ENCODE measurements at regions of chr2 and their contacts with region 1.

Region 1: DNA sequence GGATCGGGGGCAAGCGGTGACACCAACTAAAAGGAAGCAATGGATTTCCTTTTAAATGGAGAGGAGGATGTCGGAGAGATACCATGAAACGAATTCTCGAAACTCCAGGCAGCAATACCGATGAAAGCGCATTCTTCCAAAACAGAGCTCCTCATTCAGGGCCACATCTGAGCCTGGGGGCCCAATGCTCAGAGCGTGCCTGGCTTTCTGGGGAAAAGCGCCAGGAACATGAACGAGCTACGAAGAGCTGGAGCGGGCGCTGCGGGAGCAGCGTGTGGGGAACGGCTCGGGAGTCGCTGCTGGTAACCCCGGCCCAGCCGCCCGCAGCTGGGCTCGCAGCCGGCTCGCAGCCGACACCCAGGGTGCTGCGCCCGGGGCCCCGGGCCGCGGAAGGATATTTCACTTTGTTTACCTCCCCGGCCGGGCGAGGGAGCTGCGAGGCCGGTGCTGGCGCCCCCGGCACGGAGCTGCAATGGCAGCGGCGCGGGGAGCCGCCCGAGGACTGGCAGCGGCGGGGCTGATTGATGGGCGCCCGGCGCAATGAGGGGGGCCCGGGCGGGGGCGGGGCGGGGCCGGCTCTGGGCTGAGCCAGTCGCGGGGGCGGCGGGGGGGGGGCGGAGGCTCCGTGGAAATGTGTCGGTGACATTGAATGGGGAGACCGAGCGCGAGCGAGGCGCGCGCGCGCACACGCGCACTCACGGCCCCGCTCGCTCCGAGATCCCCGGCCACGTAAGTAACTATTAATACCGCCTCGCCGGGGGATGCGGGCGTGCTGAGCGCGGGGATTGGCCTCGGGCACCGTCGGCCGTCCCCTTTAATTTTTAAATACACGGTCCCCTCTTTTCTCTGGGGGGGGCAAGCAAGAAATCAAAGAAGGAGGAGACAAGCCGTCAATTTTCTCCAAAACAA is at the start of gene TRIB2:
- DNase-seq: peak; percentile 78
- ATAC-seq: peak; percentile 67
- H3K4me3 Mint-ChIP-seq: peak within 1 kb of the TSS; percentile 98
- H3K27ac Mint-ChIP-seq: peak within 1 kb of the TSS; percentile 94
- H3K4me1 Mint-ChIP-seq: peaks cover 38% of the 10 kb centered on the region
- H3K27me3 Mint-ChIP-seq: peaks cover 5% of the 10 kb centered on the region; the same call in 1 of the 2 replicates
- CTCF ChIP-seq: 0 out of 2 replicates have a peak, but pooled peaks have one; percentile 7
- total RNA-seq, gene TRIB2: 79.6 to 89.3 TPM (median 83.1 TPM) in 3 replicates

Region 2: GRCh38 chr2:12547566-12548170 is 168.9 kb before region 1 on chr2:
- CTCF ChIA-PET with region 1: interaction called, 14 read pairs
- POLR2A ChIA-PET with region 1: no interaction called
- DNase-seq: peak; percentile 54
- ATAC-seq: peak; percentile 70
- H3K4me3 Mint-ChIP-seq: no peak overlapping the region
- H3K27ac Mint-ChIP-seq: no peak overlapping the region
- H3K4me1 Mint-ChIP-seq: peaks cover 10% of the 10 kb centered on the region; the same call in 1 of the 2 replicates
- H3K27me3 Mint-ChIP-seq: no peaks in the 10 kb centered on the region
- CTCF ChIP-seq: no peak

Region 3: GRCh38 chr2:12624905-12625598 is 91.5 kb before region 1 on chr2:
- CTCF ChIA-PET with region 1: interaction called, 18 read pairs
- POLR2A ChIA-PET with region 1: no interaction called
- DNase-seq: peak; percentile 57
- ATAC-seq: peak; percentile 95
- H3K4me3 Mint-ChIP-seq: peak overlapping the region; percentile 17; the same call in 1 of the 2 replicates
- H3K27ac Mint-ChIP-seq: peak overlapping the region; percentile 73
- H3K4me1 Mint-ChIP-seq: peaks cover 52% of the 10 kb centered on the region
- H3K27me3 Mint-ChIP-seq: 0 out of 2 replicates have a peak, but pooled peaks cover 3% of the 10 kb centered on the region
- CTCF ChIP-seq: no peak

Region 4: DNA sequence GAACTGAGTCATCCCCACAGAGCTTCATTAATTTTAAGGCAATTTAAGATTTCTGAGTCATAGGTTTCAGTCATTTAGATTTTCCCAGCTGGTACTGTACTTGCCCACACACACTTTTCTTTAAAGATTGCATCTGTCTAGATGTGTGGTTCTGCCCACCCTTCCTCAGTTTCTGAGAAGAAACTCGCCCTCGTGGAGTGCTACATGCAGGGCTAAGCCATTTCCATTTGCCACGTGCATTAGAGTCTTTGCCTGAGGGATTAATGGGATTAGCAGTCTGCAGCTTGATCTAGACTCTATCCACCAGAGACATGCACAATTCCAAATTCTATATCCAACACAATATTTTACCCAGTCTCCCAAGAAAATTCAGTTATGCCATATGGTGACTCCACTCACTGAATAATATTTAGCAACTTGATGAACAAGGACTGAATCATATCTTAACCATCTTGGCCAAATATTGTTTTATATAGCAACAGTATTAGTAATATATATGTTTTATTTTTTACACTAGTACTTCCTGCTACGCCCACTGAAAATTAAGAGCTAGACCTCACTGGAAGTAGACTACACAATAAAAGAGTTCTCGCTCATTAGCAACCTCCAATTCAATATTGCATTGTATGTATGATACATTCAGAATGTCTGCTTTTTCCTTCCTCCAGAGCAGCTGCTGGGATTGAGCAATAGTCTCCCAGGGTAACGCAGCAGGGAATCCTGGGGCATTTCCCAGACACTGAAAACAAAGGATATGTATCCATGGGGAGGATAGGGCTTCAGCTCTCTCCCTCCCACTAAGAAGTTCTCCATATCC is 14.0 kb before region 1 on chr2:
- CTCF ChIA-PET with region 1: interaction called, 24 read pairs
- POLR2A ChIA-PET with region 1: no interaction called
- DNase-seq: no peak
- ATAC-seq: peak; percentile 74
- H3K4me3 Mint-ChIP-seq: no peak overlapping the region
- H3K27ac Mint-ChIP-seq: no peak overlapping the region
- H3K4me1 Mint-ChIP-seq: peaks cover 14% of the 10 kb centered on the region
- H3K27me3 Mint-ChIP-seq: no peaks in the 10 kb centered on the region
- CTCF ChIP-seq: no peak

Region 5: DNA sequence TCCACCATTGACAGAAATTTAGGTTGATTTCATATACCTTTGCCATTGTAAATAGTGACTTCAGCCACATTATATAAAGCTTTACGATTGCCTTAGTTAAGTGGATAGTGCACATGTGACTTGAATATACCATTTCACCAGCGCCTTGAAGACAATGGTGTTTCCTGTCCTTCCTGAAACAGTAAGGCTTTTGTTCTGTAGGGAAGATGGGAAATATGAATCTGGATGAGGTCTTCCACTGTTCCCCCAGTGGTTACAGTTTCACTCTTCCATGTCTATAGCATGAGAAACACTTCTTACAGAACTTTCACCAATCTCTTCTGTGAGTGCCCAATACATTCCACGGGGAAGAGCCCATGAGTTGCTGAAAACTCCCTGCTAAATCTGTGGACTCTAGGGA is 240.7 kb after region 1 on chr2:
- CTCF ChIA-PET with region 1: no interaction called
- POLR2A ChIA-PET with region 1: no interaction called
- DNase-seq: no peak
- ATAC-seq: no peak
- H3K4me3 Mint-ChIP-seq: no peak overlapping the region
- H3K27ac Mint-ChIP-seq: no peak overlapping the region
- H3K4me1 Mint-ChIP-seq: peaks cover 1% of the 10 kb centered on the region; the same call in 1 of the 2 replicates
- H3K27me3 Mint-ChIP-seq: no peaks in the 10 kb centered on the region
- CTCF ChIP-seq: no peak

Region 6: GRCh38 chr2:13006829-13007717 is 290.5 kb after region 1 on chr2:
- CTCF ChIA-PET with region 1: interaction called, 31 read pairs
- POLR2A ChIA-PET with region 1: no interaction called
- DNase-seq: peak; percentile 70
- ATAC-seq: peak; percentile 98
- H3K4me3 Mint-ChIP-seq: no peak overlapping the region
- H3K27ac Mint-ChIP-seq: no peak overlapping the region
- H3K4me1 Mint-ChIP-seq: peaks cover 19% of the 10 kb centered on the region
- H3K27me3 Mint-ChIP-seq: no peaks in the 10 kb centered on the region
- CTCF ChIP-seq: peak; percentile 85